ENCODE measurements at regions of chr2 and their contacts with region 1.

Region 1: DNA sequence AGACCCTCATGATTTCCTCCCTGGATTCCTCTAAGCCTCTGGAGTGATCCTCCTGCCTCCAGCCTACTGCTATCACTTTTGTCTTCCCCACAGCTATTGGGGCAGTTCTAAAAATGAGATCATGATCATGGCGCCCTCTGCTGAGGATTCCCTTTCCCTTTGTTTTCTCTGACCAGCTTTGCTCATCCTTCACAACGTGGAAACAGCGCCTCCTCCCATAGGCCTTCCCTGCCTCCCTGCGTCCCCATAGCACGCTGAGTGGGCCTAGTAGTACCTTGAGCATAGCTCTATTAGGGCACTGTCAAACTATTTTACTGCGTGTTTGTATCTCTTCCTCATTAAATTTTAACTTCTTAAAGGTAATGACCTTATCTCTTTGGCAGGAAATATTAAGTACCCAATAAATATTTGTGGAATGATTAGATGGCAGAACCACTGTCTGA is 207.0 kb upstream of the FANCL start:
- DNase-seq: peak in 4 of 5 donors; percentile 14 to 48 (median 34)
- ATAC-seq: peak in 2 of 4 donors; percentile 72 to 81
- H3K4me3 ChIP-seq: no peak overlapping the region
- H3K27ac ChIP-seq: no peak overlapping the region
- H3K4me1 ChIP-seq: no peaks in the 10 kb centered on the region
- H3K27me3 ChIP-seq: peaks cover 0 to 9% (median 0%) of the 10 kb centered on the region in 9 donors
- CTCF ChIP-seq: peak in 9 of 12 donors; percentile 32 to 66 (median 41)
- POLR2A ChIP-seq: no peak

Region 2: GRCh38 chr2:57759822-57760300 is 688.2 kb before region 1 on chr2:
- intact Hi-C with region 1: loop called in 7 of 10 experiments (anchors 2 to 10 kb)
- DNase-seq: peak; percentile 75 to 89 (median 81)
- ATAC-seq: peak; percentile 94 to 100 (median 97)
- H3K4me3 ChIP-seq: peak overlapping the region in 9 of 12 donors; percentile 10 to 47 (median 30)
- H3K27ac ChIP-seq: no peak overlapping the region
- H3K4me1 ChIP-seq: peaks cover 0 to 13% (median 8%) of the 10 kb centered on the region in 12 donors
- H3K27me3 ChIP-seq: peaks cover 0 to 8% (median 0%) of the 10 kb centered on the region in 9 donors
- CTCF ChIP-seq: peak; percentile 90 to 97 (median 94)
- POLR2A ChIP-seq: no peak

Measured in heart left ventricle (tissue), 16 donors.